ENCODE measurements at regions of chr16 and their contacts with region 1.

Region 1: GRCh38 chr16:72241930-72242329 is 70.0 kb upstream of the PMFBP1 start:
- DNase-seq: peak; percentile 31
- H3K4me3 ChIP-seq: no peak overlapping the region
- H3K27ac ChIP-seq: no peak overlapping the region
- H3K4me1 ChIP-seq: no peaks in the 10 kb centered on the region
- H3K27me3 ChIP-seq: no peaks in the 10 kb centered on the region
- CTCF ChIP-seq: peak; percentile 63

Region 2: DNA sequence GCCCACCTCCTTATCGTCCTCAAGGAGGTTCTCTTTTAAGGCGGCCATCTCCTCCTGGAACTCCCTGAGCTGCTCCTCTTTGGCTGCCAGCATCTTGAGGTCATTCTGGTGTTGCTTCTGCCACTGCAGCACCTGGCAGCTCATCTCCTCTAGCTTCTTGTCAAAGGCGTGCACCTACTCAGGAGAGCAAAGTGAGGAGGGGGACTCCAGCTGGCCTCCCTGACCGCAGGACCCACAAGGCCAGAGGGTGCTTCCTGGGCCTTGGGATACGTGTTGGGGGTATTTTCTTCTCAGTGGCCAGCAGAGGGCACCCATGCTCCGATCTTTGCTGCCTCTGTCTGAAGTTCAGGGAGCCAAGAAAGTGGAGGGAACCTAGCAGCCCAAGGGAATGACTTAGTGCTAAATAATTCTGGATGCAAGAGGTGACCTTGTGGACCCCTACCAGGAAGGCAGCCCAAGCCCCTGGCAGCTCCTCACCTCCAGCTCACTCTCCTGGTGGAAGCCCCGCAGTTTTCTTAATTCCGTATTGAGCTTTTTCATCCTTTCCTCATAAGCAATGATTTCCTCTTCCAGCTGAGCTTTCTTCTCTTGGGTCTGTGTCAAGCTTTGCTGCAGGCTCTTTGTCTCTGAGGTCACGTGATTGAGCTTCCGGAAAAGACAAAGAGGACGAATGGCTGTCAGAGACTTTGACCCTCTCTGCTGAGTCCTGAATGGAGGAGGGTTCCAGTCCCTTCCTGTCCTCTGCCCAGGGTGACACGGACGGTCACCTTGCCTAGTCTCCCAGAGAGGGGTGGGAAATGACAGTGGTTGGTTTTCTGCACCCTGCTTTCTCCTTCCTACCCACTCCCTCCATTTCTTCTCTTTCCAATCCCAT is 116.9 kb before region 1 on chr16:
- intact Hi-C with region 1: loop called (anchors 10 kb)
- DNase-seq: peak; percentile 76
- H3K4me3 ChIP-seq: no peak overlapping the region
- H3K27ac ChIP-seq: no peak overlapping the region
- H3K4me1 ChIP-seq: no peaks in the 10 kb centered on the region
- H3K27me3 ChIP-seq: no peaks in the 10 kb centered on the region
- CTCF ChIP-seq: peak; percentile 63

Region 3: DNA sequence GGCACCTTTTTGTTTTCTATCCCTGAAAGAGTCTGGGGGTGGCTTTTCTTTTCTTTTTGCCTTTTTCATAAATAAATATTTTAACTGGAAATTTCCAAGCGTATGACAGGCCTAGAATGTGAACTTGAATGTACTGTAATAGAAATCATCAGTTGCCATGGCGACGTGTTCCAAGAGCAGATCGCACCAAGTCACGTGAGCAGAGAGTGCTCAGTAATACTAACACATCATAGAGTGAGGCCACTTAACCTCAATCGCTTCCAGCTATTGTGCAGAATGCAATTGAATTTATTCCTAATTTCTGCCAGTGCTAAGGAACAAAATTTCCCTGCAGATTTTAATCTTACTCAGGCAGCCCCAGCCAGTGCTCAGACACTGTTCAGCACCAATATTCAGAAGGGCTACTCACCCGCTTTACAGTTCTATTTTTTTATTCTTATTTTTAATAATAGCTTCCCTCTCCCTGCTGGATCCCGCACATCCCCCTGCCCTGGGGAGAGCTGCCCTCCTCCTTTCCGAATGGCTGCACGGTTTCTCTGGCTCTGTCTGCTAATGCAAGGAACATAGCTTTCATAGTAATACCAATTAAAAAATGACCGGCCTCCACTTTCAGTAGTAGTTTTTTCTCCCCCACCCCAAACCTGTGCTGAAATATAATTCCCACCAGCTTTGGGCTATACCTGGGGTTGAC is 43.8 kb before region 1 on chr16:
- intact Hi-C with region 1: no loop called
- DNase-seq: no peak
- H3K4me3 ChIP-seq: no peak overlapping the region
- H3K27ac ChIP-seq: no peak overlapping the region
- H3K4me1 ChIP-seq: no peaks in the 10 kb centered on the region
- H3K27me3 ChIP-seq: no peaks in the 10 kb centered on the region
- CTCF ChIP-seq: no peak

Region 4: DNA sequence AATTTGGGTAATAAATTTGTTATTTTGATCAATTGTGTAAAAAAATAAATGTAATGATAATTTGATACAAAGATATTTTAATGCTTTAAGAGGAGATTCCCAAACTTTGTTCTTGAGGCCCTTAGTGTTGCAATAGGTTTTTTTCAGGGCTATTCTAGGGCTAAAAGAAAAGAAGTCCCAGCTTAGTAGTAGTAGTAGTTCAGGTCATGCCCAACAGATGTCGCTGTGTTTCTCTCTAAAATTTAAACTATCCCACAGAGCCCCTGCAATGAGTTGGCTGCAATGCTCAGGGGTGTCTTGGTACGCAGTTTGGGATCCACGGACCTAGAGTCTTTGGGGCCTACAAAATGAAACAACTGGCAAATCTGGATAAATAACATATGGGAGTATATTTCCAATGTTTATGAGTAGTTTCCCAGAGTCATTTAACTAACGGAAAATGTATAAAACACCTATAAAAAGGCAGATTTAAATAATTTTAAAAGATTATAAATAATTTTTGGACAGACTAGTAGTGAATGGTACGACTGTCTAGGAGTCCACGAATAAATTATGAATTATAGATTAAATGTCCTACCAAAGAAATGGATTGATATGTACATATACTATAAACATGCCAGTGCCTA is 158.4 kb after region 1 on chr16:
- intact Hi-C with region 1: loop called (anchors 10 kb)
- DNase-seq: peak; percentile 34
- H3K4me3 ChIP-seq: no peak overlapping the region
- H3K27ac ChIP-seq: no peak overlapping the region
- H3K4me1 ChIP-seq: no peaks in the 10 kb centered on the region
- H3K27me3 ChIP-seq: no peaks in the 10 kb centered on the region
- CTCF ChIP-seq: peak; percentile 81

Region 5: GRCh38 chr16:72467157-72467759 is 225.3 kb after region 1 on chr16:
- intact Hi-C with region 1: loop called (anchors 5 kb)
- DNase-seq: no peak
- H3K4me3 ChIP-seq: no peak overlapping the region
- H3K27ac ChIP-seq: no peak overlapping the region
- H3K4me1 ChIP-seq: no peaks in the 10 kb centered on the region
- H3K27me3 ChIP-seq: no peaks in the 10 kb centered on the region
- CTCF ChIP-seq: peak; percentile 26